ENCODE measurements at regions of chr6 and their contacts with region 1.

Region 1: DNA sequence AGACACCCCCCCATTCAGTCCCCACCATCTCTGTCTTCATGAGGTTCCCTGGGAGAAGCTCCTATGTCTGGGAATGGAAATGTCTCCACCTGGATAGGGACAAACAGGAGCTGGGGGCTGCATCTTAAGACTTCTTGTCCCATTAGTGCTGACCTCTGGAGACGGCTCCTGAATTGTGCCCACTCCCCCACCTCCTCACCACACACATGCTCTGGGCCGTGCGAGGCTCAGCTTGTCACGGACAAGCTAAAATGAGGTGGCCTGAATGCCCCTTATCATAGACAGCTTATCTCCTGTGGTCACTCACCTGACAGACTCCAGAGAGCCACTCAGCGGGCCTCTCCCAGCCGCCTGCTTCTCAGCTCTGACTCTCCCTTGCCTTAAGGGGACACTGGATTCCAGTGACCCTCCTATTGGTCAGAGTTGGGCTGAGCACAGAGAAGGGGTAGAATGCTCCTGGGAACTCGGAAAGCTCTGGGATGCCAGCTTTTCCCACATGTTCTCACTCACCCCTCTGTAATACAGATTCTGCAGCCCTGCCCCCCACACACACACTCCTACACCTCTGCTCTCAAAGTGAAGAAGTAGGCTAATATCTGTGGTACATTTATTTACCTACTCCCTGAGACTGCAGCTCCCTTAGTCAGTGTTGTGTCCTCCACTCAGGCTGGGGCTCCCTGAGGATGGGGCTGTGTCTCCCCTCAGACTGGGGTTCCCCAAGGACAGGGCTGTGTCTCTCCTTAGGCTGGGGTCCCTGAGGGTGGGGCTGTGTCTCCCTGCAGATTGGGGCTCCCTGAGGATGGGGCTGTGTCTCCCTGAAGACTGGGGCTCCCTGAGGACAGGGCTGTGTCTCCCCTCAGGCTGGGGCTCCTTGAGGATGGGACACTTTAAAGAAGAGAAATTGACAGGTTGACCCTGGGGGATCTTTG is 167.5 kb downstream of the VEGFA start:
- DNase-seq: peak; percentile 67
- H3K4me3 ChIP-seq: no peak overlapping the region
- H3K27ac ChIP-seq: peak overlapping the region in 1 of 2 experiments; percentile 100; a peak in 2 of 4 replicates
- H3K4me1 ChIP-seq: peaks cover 0 to 93% of the 10 kb centered on the region in 2 experiments; a peak in 3 of 4 replicates
- H3K27me3 ChIP-seq: no peaks in the 10 kb centered on the region
- CTCF ChIP-seq: no peak
- EP300 ChIP-seq: peak in 1 of 2 experiments; percentile 43; a peak in 2 of 4 replicates
- RAD21 ChIP-seq: 0 out of 2 replicates have a peak, but pooled peaks have one; percentile 17

Region 2: GRCh38 chr6:43790025-43790523 is 147.4 kb before region 1 on chr6:
- CTCF ChIA-PET with region 1: interaction called, 6 read pairs
- POLR2A ChIA-PET with region 1: interaction called, 10 read pairs
- DNase-seq: no peak
- H3K4me3 ChIP-seq: no peak overlapping the region
- H3K27ac ChIP-seq: no peak overlapping the region; a peak in 1 of 4 replicates
- H3K4me1 ChIP-seq: peaks cover 0 to 5% of the 10 kb centered on the region in 2 experiments; a peak in 1 of 4 replicates
- H3K27me3 ChIP-seq: no peaks in the 10 kb centered on the region
- CTCF ChIP-seq: no peak
- EP300 ChIP-seq: no peak
- RAD21 ChIP-seq: no peak

Region 3: DNA sequence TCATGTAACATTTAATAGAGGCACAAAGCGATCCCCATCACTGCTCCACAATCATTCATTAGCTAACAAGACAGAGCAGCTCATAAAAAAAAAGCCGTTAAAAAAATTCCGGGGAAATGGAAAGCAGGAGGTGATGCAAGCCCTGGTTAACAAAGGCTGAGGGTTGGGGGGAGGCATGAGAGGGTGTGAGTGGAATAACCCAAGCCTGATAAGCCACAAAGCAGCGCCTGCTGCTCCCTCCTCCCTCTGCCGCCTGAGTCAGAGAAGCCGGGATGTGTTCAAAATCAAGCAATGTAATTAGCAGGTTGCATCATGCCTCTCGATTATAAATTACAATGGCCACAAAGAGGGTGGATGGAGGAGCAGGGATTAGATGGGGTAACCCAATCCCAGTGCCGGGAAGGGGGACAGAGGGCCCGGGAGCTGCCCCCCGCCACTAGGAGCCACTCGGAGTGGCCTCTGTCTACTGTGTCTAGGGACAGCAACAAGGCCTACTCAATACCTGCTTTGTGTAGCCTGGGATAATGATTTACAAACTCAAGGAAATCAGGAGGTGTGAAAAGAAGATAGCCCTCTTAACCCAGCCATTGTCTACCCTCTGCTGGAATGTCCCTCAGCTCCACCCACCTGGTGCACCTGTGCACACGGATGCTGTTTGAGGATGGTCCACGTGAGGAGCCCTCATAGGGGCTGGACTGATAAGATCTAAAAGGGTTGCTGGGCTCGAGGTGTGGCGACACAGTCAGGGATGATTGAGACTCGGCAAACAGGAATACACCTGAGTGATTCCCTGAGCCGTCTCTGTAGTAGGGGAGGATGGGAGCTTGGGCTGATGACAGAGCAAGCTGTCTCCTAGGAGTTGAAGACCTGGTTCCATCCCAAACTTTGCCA is 10.6 kb before region 1 on chr6:
- CTCF ChIA-PET with region 1: interaction called, 22 read pairs
- POLR2A ChIA-PET with region 1: interaction called, 30 read pairs
- DNase-seq: peak; percentile 81
- H3K4me3 ChIP-seq: no peak overlapping the region
- H3K27ac ChIP-seq: peak overlapping the region; percentile 27 to 98; a peak in 3 of 4 replicates
- H3K4me1 ChIP-seq: peaks cover 40 to 82% of the 10 kb centered on the region in 2 experiments
- H3K27me3 ChIP-seq: no peaks in the 10 kb centered on the region
- CTCF ChIP-seq: no peak
- EP300 ChIP-seq: peak in 1 of 2 experiments; percentile 51; a peak in 2 of 4 replicates
- RAD21 ChIP-seq: peak; percentile 34

Region 4: DNA sequence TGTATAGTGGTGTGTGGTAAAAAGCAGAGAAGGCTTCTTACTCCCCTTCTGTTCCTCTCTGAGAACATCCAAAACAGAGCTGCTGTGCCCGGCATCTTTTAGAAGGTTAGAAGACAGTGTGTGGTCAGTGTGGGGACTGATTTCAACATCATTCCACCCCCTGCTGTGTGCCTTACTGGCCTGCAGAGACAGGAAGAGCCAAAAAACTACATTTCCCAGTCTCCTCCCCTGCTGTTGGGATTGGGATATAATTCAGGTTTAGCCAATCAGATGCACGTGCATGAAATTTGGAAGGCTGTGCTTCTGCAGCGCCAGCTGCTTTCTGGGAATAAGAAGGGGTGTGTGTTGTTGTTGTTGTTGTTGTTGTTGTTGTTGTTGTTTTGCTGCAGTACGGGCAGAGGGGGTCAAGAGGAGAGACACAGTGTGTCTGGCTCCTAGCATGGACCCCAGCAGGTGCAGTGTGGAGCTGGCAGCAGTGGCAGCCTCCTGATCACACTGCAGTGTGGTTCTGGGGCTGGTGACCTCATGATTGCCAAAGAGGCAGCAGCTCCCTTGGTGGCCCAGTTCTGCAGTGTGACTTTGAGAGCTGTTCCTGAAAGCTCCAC is 115.0 kb after region 1 on chr6:
- CTCF ChIA-PET with region 1: interaction called, 11 read pairs
- POLR2A ChIA-PET with region 1: interaction called, 19 read pairs
- DNase-seq: peak; percentile 60
- H3K4me3 ChIP-seq: no peak overlapping the region
- H3K27ac ChIP-seq: peak overlapping the region; percentile 68 to 94; a peak in 3 of 4 replicates
- H3K4me1 ChIP-seq: peaks cover 66 to 99% of the 10 kb centered on the region in 2 experiments
- H3K27me3 ChIP-seq: no peaks in the 10 kb centered on the region
- CTCF ChIP-seq: no peak
- EP300 ChIP-seq: no peak
- RAD21 ChIP-seq: no peak

Measured in SK-N-SH (cell line).